WTC11 (cell line): ENCODE measurements at regions of chr19 and their contacts with region 1.

Region 1: GRCh38 chr19:19531951-19532805 is 3.5 kb downstream of the YJEFN3 start:
- DNase-seq: peak; percentile 92
- ATAC-seq: peak; percentile 57
- H3K4me3 Mint-ChIP-seq: no peak overlapping the region
- H3K27ac Mint-ChIP-seq: no peak overlapping the region
- H3K4me1 Mint-ChIP-seq: peaks cover 21% of the 10 kb centered on the region
- H3K27me3 Mint-ChIP-seq: peaks cover 8% of the 10 kb centered on the region
- CTCF ChIP-seq: peak; percentile 92

Region 2: DNA sequence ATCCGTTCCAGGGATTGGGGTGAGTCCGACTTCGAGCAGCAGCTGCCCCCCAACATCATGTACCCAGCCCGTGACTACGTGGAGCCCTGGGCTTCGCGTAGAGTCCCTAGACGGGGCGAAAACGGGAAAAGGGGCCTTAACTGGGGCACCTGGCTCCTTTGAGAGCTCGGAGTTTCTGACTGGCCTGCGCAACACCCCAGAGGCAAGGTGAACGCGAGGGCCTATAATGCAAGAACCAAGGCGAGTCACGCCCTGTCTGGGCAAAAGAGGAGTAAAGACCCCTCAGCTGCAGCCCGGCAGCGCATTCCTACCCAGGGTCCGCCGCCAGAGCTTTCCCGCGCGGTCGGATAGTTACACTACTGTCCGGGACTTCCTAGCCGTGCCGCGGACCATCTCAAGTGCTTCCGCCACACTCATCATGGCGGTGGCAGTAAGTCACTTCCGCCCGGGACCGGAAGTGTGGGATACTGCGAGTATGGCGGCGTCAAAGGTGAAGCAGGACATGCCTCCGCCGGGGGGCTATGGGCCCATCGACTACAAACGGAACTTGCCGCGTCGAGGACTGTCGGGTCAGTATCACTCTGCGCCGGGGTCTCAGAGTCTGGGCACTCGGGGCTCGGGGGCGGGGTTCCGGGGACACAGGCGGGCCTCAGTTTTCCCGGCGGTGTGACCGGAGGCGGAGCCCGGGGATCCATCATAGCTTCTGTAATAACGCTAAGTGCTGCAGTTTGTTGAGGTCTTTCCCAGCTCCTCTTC is 16.2 kb before region 1 on chr19 and contains the start of gene NDUFA13:
- CTCF ChIA-PET with region 1: interaction called, 18 read pairs
- POLR2A ChIA-PET with region 1: interaction called, 3 read pairs
- DNase-seq: peak; percentile 95
- ATAC-seq: peak; percentile 84
- H3K4me3 Mint-ChIP-seq: peak within 1 kb of the TSS; percentile 90
- H3K27ac Mint-ChIP-seq: peak within 1 kb of the TSS; percentile 88
- H3K4me1 Mint-ChIP-seq: peaks cover 5% of the 10 kb centered on the region; the same call in 1 of the 2 replicates
- H3K27me3 Mint-ChIP-seq: no peaks in the 10 kb centered on the region
- CTCF ChIP-seq: no peak
- total RNA-seq, gene NDUFA13: 519 to 568 TPM (median 552 TPM) in 3 replicates

Region 3: GRCh38 chr19:19562665-19563347 is 30.6 kb after region 1 on chr19:
- CTCF ChIA-PET with region 1: interaction called, 408 read pairs
- POLR2A ChIA-PET with region 1: no interaction called
- DNase-seq: no peak
- ATAC-seq: peak; percentile 85
- H3K4me3 Mint-ChIP-seq: no peak overlapping the region
- H3K27ac Mint-ChIP-seq: no peak overlapping the region
- H3K4me1 Mint-ChIP-seq: peaks cover 10% of the 10 kb centered on the region
- H3K27me3 Mint-ChIP-seq: no peaks in the 10 kb centered on the region
- CTCF ChIP-seq: no peak

Region 4: GRCh38 chr19:19627621-19628500 is 95.7 kb after region 1 on chr19 and contains the start of gene LPAR2:
- CTCF ChIA-PET with region 1: interaction called, 12 read pairs
- POLR2A ChIA-PET with region 1: no interaction called
- DNase-seq: peak; percentile 76
- ATAC-seq: peak; percentile 77
- H3K4me3 Mint-ChIP-seq: peak within 1 kb of the TSS; percentile 90
- H3K27ac Mint-ChIP-seq: peak within 1 kb of the TSS; percentile 98
- H3K4me1 Mint-ChIP-seq: peaks cover 17% of the 10 kb centered on the region
- H3K27me3 Mint-ChIP-seq: no peaks in the 10 kb centered on the region; the same call in 1 of the 2 replicates
- CTCF ChIP-seq: no peak
- total RNA-seq, gene LPAR2: 42.9 to 45.1 TPM (median 44.5 TPM) in 3 replicates

Region 5: DNA sequence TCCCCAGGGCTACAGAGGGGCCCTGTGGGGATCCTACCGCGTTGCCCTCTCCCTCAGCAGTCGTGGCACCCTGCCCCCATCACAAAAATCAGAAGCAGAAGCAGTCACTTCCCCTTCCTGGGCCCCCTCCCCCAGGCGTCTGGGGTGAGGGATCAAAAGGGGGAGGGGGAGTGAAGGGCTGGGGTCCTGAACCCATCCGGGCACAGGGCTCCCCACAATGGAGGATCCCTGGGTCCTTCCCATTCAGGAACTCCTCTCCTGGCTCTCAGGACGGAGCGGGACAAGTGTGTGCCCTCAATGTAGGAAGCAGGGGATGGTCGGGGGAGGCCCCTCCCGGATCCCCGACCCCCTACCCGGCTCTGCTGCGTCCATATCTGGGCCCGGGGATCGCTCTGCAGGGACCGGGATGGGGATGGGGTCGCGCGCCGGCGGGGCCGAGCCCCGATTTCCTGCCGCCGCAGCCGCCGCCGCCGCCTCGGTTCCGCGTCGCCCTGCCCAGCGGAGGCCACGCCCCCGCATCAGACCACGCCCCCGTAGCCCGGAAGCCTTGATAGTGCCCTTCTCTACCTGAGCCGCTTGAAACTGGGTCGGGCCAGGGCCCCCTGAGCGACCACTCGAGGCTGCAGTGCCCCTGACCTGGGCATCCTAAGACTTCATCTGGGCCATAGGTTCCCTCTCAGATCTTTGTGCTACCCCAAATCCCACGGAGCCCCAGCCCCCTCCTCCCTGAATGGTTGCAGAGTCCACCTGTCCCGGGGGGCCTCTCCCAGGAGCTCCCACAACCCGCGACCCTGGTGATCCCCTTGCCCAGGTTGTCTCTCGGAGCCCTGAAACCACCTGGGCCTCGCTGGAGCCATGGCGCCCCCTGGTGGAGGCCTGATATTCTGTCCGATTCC is 111.2 kb after region 1 on chr19 and contains the start of gene GMIP:
- CTCF ChIA-PET with region 1: interaction called, 49 read pairs
- POLR2A ChIA-PET with region 1: interaction called, 3 read pairs
- DNase-seq: peak; percentile 93
- ATAC-seq: peak; percentile 94
- H3K4me3 Mint-ChIP-seq: peak within 1 kb of the TSS; percentile 94
- H3K27ac Mint-ChIP-seq: peak within 1 kb of the TSS; percentile 84
- H3K4me1 Mint-ChIP-seq: peaks cover 12% of the 10 kb centered on the region
- H3K27me3 Mint-ChIP-seq: peaks cover under 1% of the 10 kb centered on the region; the same call in 1 of the 2 replicates
- CTCF ChIP-seq: peak; percentile 92
- total RNA-seq, gene GMIP: 19.8 to 23.0 TPM (median 21.9 TPM) in 3 replicates

Region 6: GRCh38 chr19:19663256-19664038 is 131.3 kb after region 1 on chr19 and contains the start of gene ATP13A1:
- CTCF ChIA-PET with region 1: interaction called, 10 read pairs
- POLR2A ChIA-PET with region 1: no interaction called
- DNase-seq: peak; percentile 88
- ATAC-seq: peak; percentile 77
- H3K4me3 Mint-ChIP-seq: peak within 1 kb of the TSS; percentile 94
- H3K27ac Mint-ChIP-seq: peak within 1 kb of the TSS; percentile 97
- H3K4me1 Mint-ChIP-seq: peaks cover 23% of the 10 kb centered on the region
- H3K27me3 Mint-ChIP-seq: no peaks in the 10 kb centered on the region; the same call in 1 of the 2 replicates
- CTCF ChIP-seq: no peak
- total RNA-seq, gene ATP13A1: 63.4 to 82.6 TPM (median 64.3 TPM) in 3 replicates